ENCODE measurements at regions of chr3 and their contacts with region 1.

Region 1: DNA sequence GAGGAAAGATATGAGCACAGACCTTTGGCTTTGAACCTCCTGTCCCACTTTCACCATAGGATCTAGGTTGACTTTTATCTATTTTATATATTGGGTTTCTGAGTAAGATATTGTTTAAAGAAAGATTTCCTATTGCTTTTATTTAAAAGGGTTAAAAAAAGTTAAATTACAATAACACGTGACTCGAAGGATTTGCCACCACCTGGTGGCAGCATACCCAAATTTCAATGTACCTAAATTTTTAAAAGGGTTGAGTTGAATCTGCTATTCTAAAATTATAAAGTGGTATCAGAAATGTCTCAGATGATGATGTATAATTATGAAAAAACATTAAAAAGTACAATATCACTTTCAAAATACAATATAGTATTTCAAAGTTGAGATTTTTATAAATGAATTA is 368.4 kb downstream of the MECOM start:
- DNase-seq: peak; percentile 41
- H3K4me3 ChIP-seq: no peak overlapping the region
- H3K27ac ChIP-seq: no peak overlapping the region
- H3K4me1 ChIP-seq: no peaks in the 10 kb centered on the region
- H3K27me3 ChIP-seq: peaks cover 17% of the 10 kb centered on the region
- CTCF ChIP-seq: peak; percentile 72

Region 2: DNA sequence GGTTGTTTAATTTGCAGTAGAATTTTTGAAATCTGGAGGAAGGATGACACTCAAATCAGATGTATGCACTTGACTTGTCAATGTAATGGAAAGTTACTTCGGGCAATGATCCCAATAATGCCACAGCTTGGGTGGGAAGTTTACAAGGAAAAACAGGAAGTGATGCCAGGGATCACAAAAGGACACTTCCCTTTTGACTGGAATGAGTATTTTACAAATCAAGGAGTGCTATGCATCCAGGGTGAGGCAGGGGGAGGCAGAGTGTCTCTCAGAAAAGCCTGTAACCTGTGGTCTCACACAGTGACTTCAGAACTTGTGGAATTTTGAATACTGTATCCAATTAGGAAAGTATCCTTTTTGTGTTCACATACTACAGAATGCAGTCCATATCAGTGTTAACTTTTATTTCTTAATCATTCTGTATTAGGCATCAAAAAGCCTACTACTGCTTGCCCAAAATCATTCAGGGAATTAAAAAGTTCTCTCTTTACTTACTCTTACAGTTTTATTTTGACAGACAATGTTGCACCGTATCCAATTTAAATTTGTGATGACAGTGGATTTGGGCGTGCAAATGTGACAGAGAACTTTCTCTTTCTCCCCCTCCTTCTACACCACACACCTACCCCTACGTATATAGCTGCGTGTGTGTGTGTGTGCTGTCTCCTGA is 76.7 kb before region 1 on chr3:
- CTCF ChIA-PET with region 1: no interaction called
- POLR2A ChIA-PET with region 1: no interaction called
- intact Hi-C with region 1: loop called (anchors 2 kb)
- DNase-seq: peak; percentile 87
- H3K4me3 ChIP-seq: no peak overlapping the region
- H3K27ac ChIP-seq: no peak overlapping the region
- H3K4me1 ChIP-seq: peaks cover 4% of the 10 kb centered on the region
- H3K27me3 ChIP-seq: no peaks in the 10 kb centered on the region
- CTCF ChIP-seq: peak; percentile 84

Measured in A673 (cell line).